ENCODE measurements at regions of chr1 and their contacts with region 1.

Region 1: DNA sequence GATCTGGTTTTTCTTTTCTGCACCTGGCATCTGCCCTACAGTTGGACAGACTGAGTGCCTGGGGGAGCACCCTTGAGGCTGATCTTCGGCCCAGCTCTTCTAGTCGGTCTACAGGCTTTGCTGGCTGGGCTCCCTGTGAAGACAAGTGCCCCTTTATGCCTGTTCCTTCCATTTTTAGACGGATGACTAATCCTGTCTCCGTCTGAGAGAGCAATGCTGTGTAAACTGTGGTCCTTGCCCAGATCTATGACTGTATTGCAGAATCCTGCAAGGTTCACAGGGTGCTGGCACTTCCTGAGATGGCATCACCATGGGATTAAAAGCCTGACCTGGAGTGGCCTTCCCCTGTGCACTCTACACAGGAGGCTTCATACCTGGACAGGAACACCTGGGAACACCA is 47.6 kb upstream of the SAMD13 start:
- DNase-seq: peak; percentile 10 to 93 (median 85)
- H3K4me3 ChIP-seq: peak overlapping the region in 6 of 59 donors; percentile 3 to 49 (median 11)
- H3K27ac ChIP-seq: peak overlapping the region in 58 of 59 donors; percentile 10 to 95 (median 84)
- H3K27me3 ChIP-seq: no peaks in the 10 kb centered on the region
- CTCF ChIP-seq: peak in 6 of 56 donors; percentile 9 to 38 (median 16)

Region 2: DNA sequence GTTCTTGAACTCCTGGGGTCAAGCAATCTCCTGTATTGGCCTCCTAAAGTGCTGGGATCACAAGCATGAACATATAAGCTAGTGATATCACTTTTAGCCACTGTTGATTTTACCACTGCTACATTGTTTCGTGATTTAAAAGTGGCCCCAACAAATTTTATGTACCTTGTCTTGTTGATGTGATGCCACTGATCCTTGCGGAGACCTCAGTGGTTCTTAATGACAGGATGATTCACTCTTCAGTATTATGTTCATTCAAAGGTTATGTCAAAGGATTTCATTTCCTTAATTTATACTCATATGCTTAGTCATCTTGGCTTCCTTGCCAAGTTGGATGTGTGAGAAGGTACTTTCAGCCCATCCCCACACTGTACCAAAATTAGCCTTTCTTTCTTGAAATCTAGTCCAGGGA is 97.7 kb before region 1 on chr1:
- intact Hi-C with region 1: loop called (anchors 5 to 10 kb)
- DNase-seq: no peak
- H3K4me3 ChIP-seq: no peak overlapping the region
- H3K27ac ChIP-seq: peak overlapping the region in 8 of 59 donors; percentile 5 to 39 (median 23)
- H3K27me3 ChIP-seq: no peaks in the 10 kb centered on the region
- CTCF ChIP-seq: no peak

Region 3: DNA sequence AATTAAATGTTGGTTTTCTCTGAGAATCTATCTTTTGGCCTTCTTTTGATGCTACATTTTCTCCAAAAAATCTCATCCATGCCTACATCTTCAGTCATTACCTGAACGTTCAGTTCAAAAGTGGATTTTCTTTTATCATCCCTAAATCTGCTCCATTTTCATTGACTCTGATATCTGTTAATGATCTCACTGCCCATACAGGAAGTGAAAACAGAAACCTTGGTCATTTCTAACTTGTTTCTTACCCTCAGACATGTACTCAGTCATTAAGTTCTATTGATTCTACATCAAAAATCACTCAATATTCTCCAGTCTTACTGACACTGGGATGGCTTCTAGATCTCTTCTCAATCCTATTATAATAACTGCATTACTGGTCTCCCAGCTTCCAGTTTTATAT is 87.1 kb before region 1 on chr1:
- intact Hi-C with region 1: loop called in 1 of 2 experiments (anchors 10 kb)
- DNase-seq: no peak
- H3K4me3 ChIP-seq: peak overlapping the region; percentile 35 to 77 (median 62)
- H3K27ac ChIP-seq: peak overlapping the region in 51 of 59 donors; percentile 27 to 97 (median 91)
- H3K27me3 ChIP-seq: no peaks in the 10 kb centered on the region
- CTCF ChIP-seq: no peak

Region 4: DNA sequence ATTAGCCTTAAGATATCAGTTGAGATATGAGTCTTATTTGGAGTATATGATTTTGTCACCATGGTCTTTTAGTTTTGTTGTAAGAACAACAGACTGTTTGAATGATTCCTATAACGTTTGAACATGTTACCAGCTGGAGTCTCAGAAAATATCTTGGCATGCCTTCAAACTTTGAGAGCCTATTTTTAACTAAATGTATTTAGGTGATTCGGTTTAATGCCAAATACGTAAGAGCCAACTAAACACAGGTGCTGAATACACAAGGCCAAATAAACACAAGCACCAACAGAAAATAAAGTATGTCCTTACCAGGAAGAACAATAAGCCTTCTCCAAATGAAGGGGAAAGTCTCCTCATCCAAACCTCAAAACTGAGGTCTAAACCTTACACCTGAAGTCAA is 61.2 kb before region 1 on chr1:
- intact Hi-C with region 1: no loop called
- DNase-seq: no peak
- H3K4me3 ChIP-seq: no peak overlapping the region
- H3K27ac ChIP-seq: peak overlapping the region in 1 of 59 donors; percentile 24
- H3K27me3 ChIP-seq: no peaks in the 10 kb centered on the region
- CTCF ChIP-seq: no peak

Region 5: DNA sequence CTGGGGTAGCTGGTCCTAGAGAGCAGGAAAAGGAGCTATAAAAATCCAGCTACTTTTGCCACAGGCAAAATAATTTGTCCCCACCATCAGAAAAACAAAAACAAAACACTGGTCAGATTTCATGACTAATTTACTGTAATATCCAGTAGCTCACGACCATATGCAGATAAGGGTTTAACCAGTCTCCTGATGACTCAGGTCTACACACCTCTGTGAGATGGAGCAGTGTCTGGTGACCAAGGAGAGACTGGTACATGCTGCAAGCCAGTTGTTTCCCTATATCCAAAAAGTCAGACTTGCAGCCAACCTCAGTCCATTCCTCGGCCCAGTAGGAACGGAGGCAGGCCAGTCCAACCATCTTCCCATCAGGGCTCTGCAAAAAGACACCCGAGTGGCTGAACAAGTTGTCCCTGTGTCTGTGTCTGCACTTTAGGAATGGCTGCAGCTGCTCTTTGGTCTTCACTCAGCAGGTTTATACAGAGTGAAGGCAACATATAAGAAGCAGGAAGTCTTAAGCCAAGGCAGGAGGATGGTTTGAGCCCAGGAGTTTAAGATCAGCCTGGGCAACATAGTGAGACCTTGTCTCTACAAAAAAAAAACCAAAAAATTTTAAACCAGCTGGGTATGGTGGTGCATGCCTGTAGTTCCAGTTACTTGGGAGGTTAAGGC is 173.8 kb after region 1 on chr1:
- intact Hi-C with region 1: loop called (anchors 5 kb)
- DNase-seq: no peak
- H3K4me3 ChIP-seq: no peak overlapping the region
- H3K27ac ChIP-seq: no peak overlapping the region
- H3K27me3 ChIP-seq: no peaks in the 10 kb centered on the region
- CTCF ChIP-seq: no peak

Measured in dorsolateral prefrontal cortex (tissue), 120 donors.